ENCODE measurements at regions of chr5 and their contacts with region 1.

Region 1: DNA sequence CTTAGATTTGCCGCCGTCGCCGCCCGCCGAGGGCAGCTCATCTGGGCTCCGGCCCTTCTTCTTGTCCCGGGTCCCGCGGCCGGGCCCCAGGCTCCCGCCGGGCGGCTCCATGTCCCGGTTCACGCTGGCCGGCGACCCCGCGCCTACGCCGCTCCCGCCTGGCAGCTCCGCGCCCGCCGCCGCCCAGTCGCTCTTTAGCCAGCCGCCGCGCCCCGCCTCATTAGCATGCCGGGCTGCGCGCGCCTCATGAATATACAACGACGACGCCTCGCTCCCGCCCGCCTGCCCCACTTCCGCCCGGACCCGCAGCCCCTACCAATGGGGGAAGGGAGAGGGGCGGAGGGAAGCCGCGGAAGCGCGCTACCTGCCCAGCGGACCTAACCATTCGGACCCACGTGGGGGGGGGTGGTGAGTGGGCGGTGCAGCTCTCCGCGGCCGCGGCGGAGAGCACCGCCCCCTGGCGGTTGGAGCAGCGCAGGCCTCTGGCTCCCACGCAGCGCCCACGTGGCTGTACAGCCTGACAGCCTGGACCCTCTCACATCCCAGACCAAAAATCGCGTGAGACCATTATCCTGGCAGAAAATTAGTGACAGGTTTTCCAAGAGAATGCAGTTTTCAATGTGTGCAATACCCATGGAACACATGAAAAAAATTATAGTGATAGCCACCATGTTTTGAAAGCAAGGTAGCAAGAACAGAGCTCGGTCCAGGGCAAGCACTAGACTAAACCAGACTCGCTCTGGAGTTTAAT is at the start of gene DIAPH1:
- DNase-seq: peak; percentile 95
- ATAC-seq: peak; percentile 89
- H3K4me3 Mint-ChIP-seq: peak within 1 kb of the TSS; percentile 93
- H3K27ac Mint-ChIP-seq: peak within 1 kb of the TSS; percentile 92
- H3K4me1 Mint-ChIP-seq: peaks cover 66% of the 10 kb centered on the region
- H3K27me3 Mint-ChIP-seq: no peaks in the 10 kb centered on the region
- CTCF ChIP-seq: peak; percentile 69
- total RNA-seq, gene DIAPH1: 136 and 138 TPM in 2 replicates

Region 2: DNA sequence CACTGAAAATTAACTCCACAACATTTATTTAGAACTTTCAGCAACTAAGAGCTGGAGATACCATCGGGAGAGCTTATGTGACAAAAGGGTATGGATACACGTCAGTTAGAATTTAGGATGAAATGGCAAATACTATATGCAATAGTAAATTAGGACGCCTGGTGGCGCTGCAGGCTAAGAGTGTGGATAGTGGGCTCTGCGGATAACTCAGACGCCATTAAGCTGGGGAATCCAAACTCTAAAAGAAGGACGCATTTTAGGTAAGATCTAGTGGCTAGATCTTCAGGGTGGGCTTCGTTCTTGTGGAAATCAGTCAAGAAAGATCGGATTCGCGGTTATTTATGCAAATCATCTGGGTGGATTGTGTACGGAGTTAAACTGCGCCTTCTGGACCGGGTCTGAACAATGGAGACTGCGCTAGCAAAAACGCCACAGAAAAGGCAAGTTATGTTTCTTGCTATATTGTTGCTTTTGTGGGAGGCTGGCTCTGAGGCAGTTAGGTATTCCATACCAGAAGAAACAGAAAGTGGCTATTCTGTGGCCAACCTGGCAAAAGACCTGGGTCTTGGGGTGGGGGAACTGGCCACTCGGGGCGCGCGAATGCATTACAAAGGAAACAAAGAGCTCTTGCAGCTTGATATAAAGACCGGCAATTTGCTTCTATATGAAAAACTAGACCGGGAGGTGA is 483.8 kb before region 1 on chr5 and contains the start of gene PCDHB5:
- CTCF ChIA-PET with region 1: no interaction called
- POLR2A ChIA-PET with region 1: no interaction called
- intact Hi-C with region 1: no loop called
- DNase-seq: no peak
- ATAC-seq: no peak
- H3K4me3 Mint-ChIP-seq: peak within 1 kb of the TSS; percentile 35
- H3K27ac Mint-ChIP-seq: no peak within 1 kb of the TSS
- H3K4me1 Mint-ChIP-seq: no peaks in the 10 kb centered on the region
- H3K27me3 Mint-ChIP-seq: peaks cover 6% of the 10 kb centered on the region
- CTCF ChIP-seq: no peak
- total RNA-seq, gene PCDHB5: not detected in 2 replicates

Region 3: GRCh38 chr5:141512390-141512910 is 106.5 kb before region 1 on chr5:
- CTCF ChIA-PET with region 1: no interaction called
- POLR2A ChIA-PET with region 1: no interaction called
- intact Hi-C with region 1: loop called (anchors 5 kb)
- DNase-seq: peak; percentile 66
- ATAC-seq: no peak
- H3K4me3 Mint-ChIP-seq: peak overlapping the region; percentile 85
- H3K27ac Mint-ChIP-seq: peak overlapping the region; percentile 20
- H3K4me1 Mint-ChIP-seq: peaks cover 84% of the 10 kb centered on the region
- H3K27me3 Mint-ChIP-seq: no peaks in the 10 kb centered on the region
- CTCF ChIP-seq: peak; percentile 37

Region 4: GRCh38 chr5:141598391-141599350 is 20.3 kb before region 1 on chr5:
- CTCF ChIA-PET with region 1: interaction called, 315 read pairs
- POLR2A ChIA-PET with region 1: interaction called, 99 read pairs
- intact Hi-C with region 1: no loop called
- DNase-seq: no peak
- ATAC-seq: no peak
- H3K4me3 Mint-ChIP-seq: no peak overlapping the region
- H3K27ac Mint-ChIP-seq: peak overlapping the region; percentile 66
- H3K4me1 Mint-ChIP-seq: peaks cover 64% of the 10 kb centered on the region
- H3K27me3 Mint-ChIP-seq: no peaks in the 10 kb centered on the region
- CTCF ChIP-seq: no peak

Region 5: DNA sequence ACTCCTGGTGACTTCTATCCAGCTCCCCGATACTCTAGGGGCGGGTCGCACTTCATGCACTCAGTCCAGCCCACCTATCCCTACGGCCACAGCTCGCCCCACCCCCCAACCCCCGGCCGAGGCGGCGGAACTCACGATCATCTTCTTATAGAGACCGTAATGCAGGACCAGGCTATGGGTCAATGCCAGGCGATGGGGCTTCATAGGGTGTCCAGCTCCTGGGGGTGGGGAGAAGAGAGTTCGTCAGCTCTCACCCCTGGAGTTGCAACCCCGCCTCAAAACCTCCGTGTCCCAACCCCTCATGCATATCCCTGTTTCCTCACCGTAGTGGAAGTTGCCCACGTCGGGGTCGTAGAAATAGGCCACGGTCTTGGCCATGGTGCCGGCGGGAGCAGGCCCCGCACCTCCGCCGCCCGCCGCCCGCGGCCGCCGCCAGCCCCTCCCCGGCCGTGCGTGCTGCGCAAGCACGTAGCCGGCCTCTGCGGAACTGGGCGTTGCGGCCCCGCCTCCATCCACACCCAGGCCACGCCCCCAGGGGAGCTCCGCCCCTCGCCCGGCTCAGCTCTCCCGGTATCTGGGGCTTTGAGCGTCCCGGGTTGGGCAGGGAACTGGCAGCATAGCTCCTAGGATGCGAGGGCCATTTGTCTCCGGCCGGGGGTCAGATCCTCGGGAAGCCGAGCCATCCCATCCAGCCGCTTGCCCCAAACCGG is 17.6 kb after region 1 on chr5 and contains the starts of genes HDAC3 and RELL2:
- CTCF ChIA-PET with region 1: interaction called, 42 read pairs
- POLR2A ChIA-PET with region 1: interaction called, 95 read pairs
- intact Hi-C with region 1: loop called (anchors 1 kb)
- DNase-seq: peak; percentile 99
- ATAC-seq: peak; percentile 84
- H3K4me3 Mint-ChIP-seq: peak within 1 kb of the TSS; percentile 89
- H3K27ac Mint-ChIP-seq: peak within 1 kb of the TSS; percentile 73
- H3K4me1 Mint-ChIP-seq: peaks cover 39% of the 10 kb centered on the region
- H3K27me3 Mint-ChIP-seq: no peaks in the 10 kb centered on the region
- CTCF ChIP-seq: no peak
- total RNA-seq, gene HDAC3: 101 and 102 TPM in 2 replicates
- total RNA-seq, gene RELL2: 16.8 and 18.9 TPM in 2 replicates

Region 6: GRCh38 chr5:142108432-142109330 is 489.7 kb after region 1 on chr5 and contains the start of gene NDFIP1:
- CTCF ChIA-PET with region 1: no interaction called
- POLR2A ChIA-PET with region 1: interaction called, 12 read pairs
- intact Hi-C with region 1: no loop called
- DNase-seq: peak; percentile 84
- ATAC-seq: peak; percentile 97
- H3K4me3 Mint-ChIP-seq: peak within 1 kb of the TSS; percentile 84
- H3K27ac Mint-ChIP-seq: peak within 1 kb of the TSS; percentile 83
- H3K4me1 Mint-ChIP-seq: peaks cover 31% of the 10 kb centered on the region
- H3K27me3 Mint-ChIP-seq: no peaks in the 10 kb centered on the region
- CTCF ChIP-seq: no peak
- total RNA-seq, gene NDFIP1: 19.7 and 24.2 TPM in 2 replicates

Measured in activated B cell treated with CpG ODN at 0.5 μM for 24 hours (primary cell).